ENCODE measurements at regions of chr18 and their contacts with region 1.

Region 1: GRCh38 chr18:7514796-7515440 is 52.2 kb upstream of the PTPRM start:
- DNase-seq: peak; percentile 12
- H3K4me3 ChIP-seq: no peak overlapping the region
- H3K27ac ChIP-seq: no peak overlapping the region
- H3K4me1 ChIP-seq: peaks cover 10% of the 10 kb centered on the region
- H3K27me3 ChIP-seq: no peaks in the 10 kb centered on the region
- CTCF ChIP-seq: no peak

Region 2: GRCh38 chr18:7467710-7468466 is 47.0 kb before region 1 on chr18:
- CTCF ChIA-PET with region 1: no interaction called
- dilution Hi-C with region 1: loop called (anchors 5 kb)
- in situ Hi-C with region 1: no loop called
- intact Hi-C with region 1: no loop called
- DNase-seq: peak; percentile 31
- H3K4me3 ChIP-seq: no peak overlapping the region
- H3K27ac ChIP-seq: no peak overlapping the region
- H3K4me1 ChIP-seq: no peaks in the 10 kb centered on the region
- H3K27me3 ChIP-seq: no peaks in the 10 kb centered on the region
- CTCF ChIP-seq: no peak

Region 3: DNA sequence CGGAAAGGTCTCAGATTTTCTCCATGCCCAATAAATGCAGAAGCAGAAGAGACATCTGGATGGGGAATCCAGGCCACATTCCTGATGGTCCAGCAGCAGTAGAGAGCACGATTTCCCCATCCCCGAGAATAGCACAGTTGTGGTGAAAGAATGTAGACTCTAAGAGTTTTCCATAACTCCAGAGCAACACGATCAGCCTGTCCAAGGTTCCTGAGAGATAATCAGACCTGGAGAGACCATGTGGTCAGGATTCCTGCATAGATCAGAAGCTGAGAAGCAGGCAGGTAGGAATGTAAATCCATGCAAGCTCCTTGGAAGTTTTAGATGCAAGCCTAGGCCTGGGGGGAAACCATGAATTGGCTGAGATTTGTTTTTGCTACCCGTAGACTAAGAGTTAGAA is 18.0 kb after region 1 on chr18:
- CTCF ChIA-PET with region 1: no interaction called
- dilution Hi-C with region 1: no loop called
- in situ Hi-C with region 1: no loop called
- intact Hi-C with region 1: no loop called
- DNase-seq: no peak
- H3K4me3 ChIP-seq: no peak overlapping the region
- H3K27ac ChIP-seq: no peak overlapping the region
- H3K4me1 ChIP-seq: no peaks in the 10 kb centered on the region
- H3K27me3 ChIP-seq: no peaks in the 10 kb centered on the region
- CTCF ChIP-seq: no peak

Region 4: DNA sequence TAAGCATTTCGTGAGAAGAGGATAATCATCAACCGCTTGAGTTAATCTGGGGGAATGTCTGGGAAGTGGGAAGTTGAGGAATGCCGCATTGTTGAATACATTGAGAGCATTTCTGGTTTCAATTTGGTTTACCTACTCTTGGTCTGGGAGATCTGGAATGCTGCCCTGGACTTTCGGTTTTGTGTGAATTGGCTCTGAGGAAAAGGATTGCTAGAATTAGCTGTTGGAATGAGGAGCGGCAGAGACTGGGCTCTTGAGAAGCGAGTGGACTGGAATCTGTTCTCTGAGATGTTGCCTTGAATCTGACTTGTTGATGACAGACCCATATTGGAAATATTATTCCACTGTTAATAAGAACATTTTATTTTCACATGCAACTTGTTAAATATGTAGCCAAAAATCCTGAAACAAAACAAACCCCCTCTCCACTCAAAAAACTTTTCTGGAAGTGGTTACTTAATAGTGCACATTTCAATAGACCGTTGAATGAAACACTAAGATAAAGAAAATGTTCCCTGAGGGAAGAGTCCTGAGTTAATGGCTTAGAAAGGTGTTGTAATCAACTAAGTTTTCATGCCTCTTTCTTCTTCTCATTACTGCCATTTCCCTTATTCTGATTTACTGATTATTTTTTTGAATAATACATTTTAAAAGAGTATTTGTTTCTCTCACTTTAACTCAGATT is 103.0 kb after region 1 on chr18:
- CTCF ChIA-PET with region 1: no interaction called
- dilution Hi-C with region 1: no loop called
- in situ Hi-C with region 1: no loop called
- intact Hi-C with region 1: no loop called
- DNase-seq: peak; percentile 51
- H3K4me3 ChIP-seq: peak overlapping the region in 2 of 3 experiments; percentile 14 to 24
- H3K27ac ChIP-seq: peak overlapping the region; percentile 49
- H3K4me1 ChIP-seq: peaks cover 28% of the 10 kb centered on the region
- H3K27me3 ChIP-seq: no peaks in the 10 kb centered on the region
- CTCF ChIP-seq: no peak